ENCODE measurements at regions of chr10 and their contacts with region 1.

Region 1: DNA sequence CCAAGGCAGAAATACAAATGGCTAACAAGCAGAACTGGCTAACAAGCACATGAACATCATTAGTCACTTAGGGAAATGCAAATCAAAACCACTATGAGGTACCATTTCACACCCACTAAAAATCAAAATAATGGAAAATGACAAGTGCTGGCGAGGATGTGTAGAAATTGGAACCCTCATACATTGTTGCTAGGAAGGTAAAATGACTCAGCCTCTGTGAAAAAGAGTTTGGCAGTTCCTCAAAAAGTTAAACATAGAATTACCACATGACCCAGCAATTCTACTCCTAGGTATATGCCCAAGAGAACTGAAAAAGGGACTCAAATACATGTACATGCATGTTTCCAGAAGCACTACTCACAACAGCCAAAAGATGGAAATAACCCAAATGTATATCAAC is 52.8 kb upstream of the ANAPC16 start:
- DNase-seq: peak; percentile 49
- H3K4me3 Mint-ChIP-seq: no peak overlapping the region
- H3K27ac Mint-ChIP-seq: peak overlapping the region; percentile 54
- H3K4me1 Mint-ChIP-seq: peaks cover 34% of the 10 kb centered on the region
- H3K27me3 Mint-ChIP-seq: no peaks in the 10 kb centered on the region

Region 2: DNA sequence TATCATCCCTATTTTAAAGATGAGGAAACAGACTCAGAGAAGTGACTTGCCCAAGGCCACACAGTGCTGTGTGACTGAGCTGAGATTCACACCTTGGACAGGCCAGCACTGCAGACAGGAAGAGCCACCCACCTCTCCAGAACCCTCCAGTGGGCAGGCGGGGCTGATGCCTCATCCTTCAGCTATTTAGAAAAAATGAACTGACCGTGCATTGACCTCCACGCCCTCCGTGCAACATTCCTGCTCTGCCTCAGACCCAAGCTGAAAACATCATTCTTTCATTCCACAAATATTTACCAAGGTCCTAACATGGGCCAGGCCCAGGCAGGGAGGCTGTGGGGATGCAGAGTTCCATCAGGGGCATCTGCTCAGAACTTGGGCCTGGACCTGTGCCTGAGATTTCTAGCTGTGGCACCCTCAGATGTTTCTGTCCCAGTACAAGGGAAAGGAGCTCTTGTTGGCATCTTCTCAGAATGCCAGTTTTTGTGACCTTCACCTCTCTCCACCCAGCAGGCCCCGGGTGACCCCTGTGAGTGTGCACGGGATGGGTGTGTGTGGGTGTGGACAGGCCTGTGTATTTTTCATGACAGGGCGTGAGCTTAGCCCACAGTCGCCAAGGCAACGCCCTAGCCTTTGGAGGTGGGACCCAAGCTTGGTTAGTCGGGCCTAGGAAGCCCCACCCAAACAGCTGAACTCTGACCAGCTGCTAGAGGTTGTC is 396.1 kb before region 1 on chr10:
- CTCF ChIA-PET with region 1: no interaction called
- intact Hi-C with region 1: loop called (anchors 10 kb)
- DNase-seq: no peak
- H3K4me3 Mint-ChIP-seq: peak overlapping the region; percentile 52
- H3K27ac Mint-ChIP-seq: peak overlapping the region; percentile 98
- H3K4me1 Mint-ChIP-seq: peaks cover 89% of the 10 kb centered on the region
- H3K27me3 Mint-ChIP-seq: no peaks in the 10 kb centered on the region

Region 3: DNA sequence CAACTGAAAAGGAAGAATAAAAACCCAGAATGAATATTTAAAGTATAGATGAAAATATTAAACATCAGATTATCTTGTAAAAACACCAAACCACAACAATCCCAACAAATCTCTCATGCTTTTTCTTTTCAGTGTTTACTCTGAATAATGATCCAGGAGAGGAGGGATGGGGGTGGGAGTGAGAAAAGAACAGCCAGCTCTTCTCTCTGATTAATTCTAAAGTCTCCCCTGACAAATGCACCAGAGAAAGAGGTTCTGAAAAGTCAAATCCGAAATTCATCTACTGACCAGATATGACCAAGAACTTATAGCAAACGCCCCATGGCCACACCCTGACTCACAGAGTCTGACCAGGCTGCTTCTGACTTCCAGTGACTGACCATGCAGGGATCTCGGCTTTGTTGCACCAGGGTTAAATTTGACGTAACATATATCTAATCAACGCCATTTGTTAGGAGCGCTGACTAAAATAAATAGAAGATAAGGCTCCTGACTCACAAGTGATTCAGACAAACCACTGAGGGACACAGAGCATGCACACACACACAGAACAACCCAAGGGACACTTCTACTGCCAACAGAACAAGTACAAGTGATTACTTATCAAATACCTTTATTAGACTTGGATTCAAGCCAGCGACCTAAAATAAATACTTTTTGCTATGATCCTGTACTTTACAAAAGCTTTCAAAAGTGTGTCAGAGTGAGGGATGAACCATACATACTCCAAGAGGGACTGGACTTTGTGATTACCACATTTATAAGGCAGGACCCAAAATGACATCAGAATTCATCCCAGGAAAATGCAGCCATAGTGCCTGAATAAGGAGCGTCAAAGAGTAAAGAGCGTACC is 65.3 kb before region 1 on chr10:
- CTCF ChIA-PET with region 1: no interaction called
- intact Hi-C with region 1: loop called (anchors 1 kb)
- DNase-seq: no peak
- H3K4me3 Mint-ChIP-seq: no peak overlapping the region
- H3K27ac Mint-ChIP-seq: no peak overlapping the region
- H3K4me1 Mint-ChIP-seq: peaks cover 68% of the 10 kb centered on the region
- H3K27me3 Mint-ChIP-seq: no peaks in the 10 kb centered on the region

Region 4: DNA sequence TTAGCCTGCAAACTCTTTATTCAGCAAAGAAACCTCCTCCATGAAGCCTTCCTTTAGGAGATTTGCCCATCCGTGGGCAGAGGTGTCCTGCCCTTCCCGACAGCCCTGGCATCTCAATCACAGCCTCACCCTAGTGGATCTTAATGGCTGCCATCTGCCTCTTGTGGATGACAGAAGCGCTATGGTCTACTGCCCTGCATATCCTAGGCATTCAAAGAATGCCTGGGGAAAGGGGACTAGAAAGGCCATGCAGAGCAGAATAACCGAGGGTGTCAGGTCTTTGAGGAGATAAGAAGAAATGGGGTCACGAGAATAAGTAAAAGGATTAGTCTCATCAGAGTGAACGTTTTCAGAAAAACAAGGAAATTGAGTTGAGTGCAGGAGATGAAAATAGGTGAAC is 16.9 kb before region 1 on chr10:
- CTCF ChIA-PET with region 1: interaction called, 5 read pairs
- intact Hi-C with region 1: loop called (anchors 2 kb)
- DNase-seq: no peak
- H3K4me3 Mint-ChIP-seq: no peak overlapping the region
- H3K27ac Mint-ChIP-seq: no peak overlapping the region
- H3K4me1 Mint-ChIP-seq: peaks cover 15% of the 10 kb centered on the region
- H3K27me3 Mint-ChIP-seq: no peaks in the 10 kb centered on the region

Region 5: DNA sequence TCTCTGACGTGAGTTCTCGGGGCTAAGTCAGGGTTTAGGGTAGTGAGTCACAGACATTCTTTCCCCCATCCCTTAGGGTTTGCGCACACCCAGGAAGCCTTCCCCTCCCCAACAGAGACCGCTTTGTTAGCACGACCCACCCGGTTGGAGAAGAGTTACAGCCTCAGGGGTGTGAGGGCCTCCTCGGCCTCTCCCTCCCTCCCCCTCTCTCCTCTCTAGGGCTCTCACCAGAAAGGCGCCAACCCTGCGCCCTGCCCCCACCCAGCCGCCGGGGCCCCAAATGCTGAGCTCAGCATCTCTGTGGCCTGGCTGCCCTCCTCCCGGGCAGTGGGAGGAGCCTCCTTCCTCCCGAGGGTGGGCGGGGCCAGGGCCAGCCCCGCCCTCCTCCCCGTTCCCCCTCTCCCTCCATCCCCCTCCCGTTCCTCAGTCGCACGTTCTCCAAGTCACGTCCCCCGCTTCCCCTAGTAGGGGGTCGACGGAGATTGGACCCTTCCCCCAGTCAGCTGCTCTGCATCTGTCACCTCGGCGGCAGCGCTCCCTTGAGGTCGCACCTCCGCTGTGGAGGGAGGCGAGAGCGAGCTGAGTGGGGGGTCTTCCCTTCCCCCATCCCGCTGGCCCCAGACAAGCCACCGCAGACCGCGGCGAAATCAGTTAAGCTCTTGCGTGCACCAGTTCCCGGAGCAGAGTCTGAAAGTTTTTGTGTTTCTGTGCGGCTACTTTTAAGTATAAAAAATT is 97.8 kb after region 1 on chr10:
- CTCF ChIA-PET with region 1: no interaction called
- intact Hi-C with region 1: loop called (anchors 2 kb)
- DNase-seq: peak; percentile 94
- H3K4me3 Mint-ChIP-seq: peak overlapping the region; percentile 81
- H3K27ac Mint-ChIP-seq: peak overlapping the region; percentile 99
- H3K4me1 Mint-ChIP-seq: peaks cover 65% of the 10 kb centered on the region
- H3K27me3 Mint-ChIP-seq: no peaks in the 10 kb centered on the region

Region 6: GRCh38 chr10:72567884-72568640 is 405.1 kb after region 1 on chr10:
- CTCF ChIA-PET with region 1: no interaction called
- intact Hi-C with region 1: loop called (anchors 1 kb)
- DNase-seq: no peak
- H3K4me3 Mint-ChIP-seq: no peak overlapping the region
- H3K27ac Mint-ChIP-seq: no peak overlapping the region
- H3K4me1 Mint-ChIP-seq: peaks cover 21% of the 10 kb centered on the region
- H3K27me3 Mint-ChIP-seq: no peaks in the 10 kb centered on the region

Measured in activated naive CD4-positive, alpha-beta T cell treated with anti-CD3 and anti-CD28 coated beads for 36 hours (primary cell).